Vagina (tissue), 2 donors: ENCODE measurements at regions of chr13 and their contacts with region 1.

Region 1: GRCh38 chr13:89294115-89294867 is 1623.1 kb downstream of the SLITRK5 start:
- DNase-seq: no peak
- H3K4me3 ChIP-seq: no peak overlapping the region
- H3K27ac ChIP-seq: no peak overlapping the region
- H3K4me1 ChIP-seq: no peaks in the 10 kb centered on the region
- H3K27me3 ChIP-seq: no peaks in the 10 kb centered on the region
- CTCF ChIP-seq: no peak
- POLR2A ChIP-seq: no peak

Region 2: DNA sequence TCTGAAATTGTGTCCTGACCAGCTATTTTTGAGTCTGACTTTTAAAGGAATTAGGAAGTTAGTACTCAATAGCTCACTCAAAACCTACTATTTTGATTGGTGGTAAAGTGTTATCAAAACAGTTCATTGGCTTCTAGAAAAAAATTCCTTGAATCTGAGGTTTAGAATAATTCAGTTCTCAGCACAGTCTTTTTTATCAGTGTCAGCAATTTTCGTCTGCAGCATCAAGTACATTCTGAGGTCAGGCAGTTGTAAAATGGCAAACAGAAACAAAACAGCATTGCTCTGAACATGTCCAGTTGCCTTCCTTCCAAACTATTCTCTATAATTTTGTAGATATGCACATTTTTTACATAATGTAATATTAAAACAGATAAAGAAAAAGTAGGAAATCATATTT is 21.0 kb after region 1 on chr13:
- intact Hi-C with region 1: loop called (anchors 2 kb)
- DNase-seq: no peak
- H3K4me3 ChIP-seq: no peak overlapping the region
- H3K27ac ChIP-seq: no peak overlapping the region
- H3K4me1 ChIP-seq: no peaks in the 10 kb centered on the region
- H3K27me3 ChIP-seq: no peaks in the 10 kb centered on the region
- CTCF ChIP-seq: no peak
- POLR2A ChIP-seq: no peak